Caco-2 (cell line): ENCODE measurements at regions of chr11 and their contacts with region 1.

Region 1: GRCh38 chr11:96342961-96343711 is at the start of gene MAML2:
- DNase-seq: peak; percentile 96 to 97
- H3K4me3 ChIP-seq: peak within 1 kb of the TSS; percentile 66
- H3K4me3 Mint-ChIP-seq: peak within 1 kb of the TSS; percentile 93
- H3K27ac Mint-ChIP-seq: peak within 1 kb of the TSS; percentile 68
- H3K4me1 ChIP-seq: peaks cover 19% of the 10 kb centered on the region
- H3K4me1 Mint-ChIP-seq: peaks cover 24% of the 10 kb centered on the region
- H3K27me3 ChIP-seq: no peaks in the 10 kb centered on the region
- H3K27me3 Mint-ChIP-seq: no peaks in the 10 kb centered on the region
- CTCF ChIP-seq: peak; percentile 99
- total RNA-seq, gene MAML2: 11.5 and 12.2 TPM in 2 replicates

Region 2: GRCh38 chr11:95923728-95924413 is 419.3 kb before region 1 on chr11 and contains the start of gene MTMR2:
- CTCF ChIA-PET with region 1: interaction called, 7 read pairs
- POLR2A ChIA-PET with region 1: no interaction called
- intact Hi-C with region 1: loop called (anchors 2 kb)
- DNase-seq: peak; percentile 88 to 91
- H3K4me3 ChIP-seq: peak within 1 kb of the TSS; percentile 84
- H3K4me3 Mint-ChIP-seq: peak within 1 kb of the TSS; percentile 88
- H3K27ac Mint-ChIP-seq: peak within 1 kb of the TSS; percentile 96
- H3K4me1 ChIP-seq: peaks cover 6% of the 10 kb centered on the region
- H3K4me1 Mint-ChIP-seq: peaks cover 13% of the 10 kb centered on the region
- H3K27me3 ChIP-seq: no peaks in the 10 kb centered on the region
- H3K27me3 Mint-ChIP-seq: no peaks in the 10 kb centered on the region
- CTCF ChIP-seq: peak in 1 of 2 experiments; percentile 14
- total RNA-seq, gene MTMR2: 75.2 and 76.4 TPM in 2 replicates

Region 3: DNA sequence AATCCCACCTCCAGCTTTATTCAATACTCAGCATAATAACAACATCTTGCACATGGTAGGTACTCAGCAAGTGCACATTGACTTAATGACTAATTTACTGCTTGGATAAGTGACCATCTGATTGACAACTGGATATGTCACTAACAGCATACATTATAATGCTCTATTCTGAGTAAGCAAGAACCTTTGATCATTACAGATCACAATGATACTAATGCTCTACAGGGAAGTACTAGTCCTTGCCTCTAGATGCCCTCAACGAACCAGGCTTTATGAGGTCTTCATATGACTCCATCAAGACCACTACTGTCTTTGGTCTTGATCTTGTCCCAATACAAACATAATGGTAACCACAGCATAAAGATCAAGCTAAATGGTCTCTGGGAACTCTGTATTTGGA is 251.7 kb before region 1 on chr11:
- CTCF ChIA-PET with region 1: interaction called, 34 read pairs
- POLR2A ChIA-PET with region 1: no interaction called
- intact Hi-C with region 1: loop called (anchors 1 kb)
- DNase-seq: no peak
- H3K4me3 ChIP-seq: no peak overlapping the region
- H3K4me3 Mint-ChIP-seq: no peak overlapping the region
- H3K27ac Mint-ChIP-seq: peak overlapping the region; percentile 94
- H3K4me1 ChIP-seq: peaks cover 45% of the 10 kb centered on the region
- H3K4me1 Mint-ChIP-seq: peaks cover 59% of the 10 kb centered on the region
- H3K27me3 ChIP-seq: no peaks in the 10 kb centered on the region
- H3K27me3 Mint-ChIP-seq: no peaks in the 10 kb centered on the region
- CTCF ChIP-seq: peak; percentile 12 to 25

Region 4: DNA sequence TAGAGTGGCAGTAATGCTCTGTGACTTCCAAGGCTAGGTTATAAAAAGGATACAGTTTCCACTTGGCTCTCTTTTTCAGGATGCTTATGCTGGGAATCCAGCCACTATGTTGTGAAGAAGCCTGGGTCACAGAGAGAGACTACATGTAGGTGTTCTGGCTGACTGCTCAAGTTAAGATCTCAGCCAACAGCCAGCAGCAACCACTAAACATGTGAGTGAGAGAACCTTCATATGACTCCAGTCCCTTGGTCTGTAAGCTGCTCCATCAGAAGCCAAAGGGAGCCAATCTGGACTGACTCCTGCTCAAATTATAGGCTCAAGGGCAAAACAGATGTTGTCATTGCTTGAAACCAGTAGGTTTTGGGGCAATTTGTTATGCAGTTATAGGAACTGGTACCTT is 162.8 kb before region 1 on chr11:
- CTCF ChIA-PET with region 1: no interaction called
- POLR2A ChIA-PET with region 1: no interaction called
- intact Hi-C with region 1: no loop called
- DNase-seq: no peak
- H3K4me3 ChIP-seq: no peak overlapping the region
- H3K4me3 Mint-ChIP-seq: no peak overlapping the region
- H3K27ac Mint-ChIP-seq: no peak overlapping the region
- H3K4me1 ChIP-seq: no peaks in the 10 kb centered on the region
- H3K4me1 Mint-ChIP-seq: no peaks in the 10 kb centered on the region
- H3K27me3 ChIP-seq: no peaks in the 10 kb centered on the region
- H3K27me3 Mint-ChIP-seq: no peaks in the 10 kb centered on the region
- CTCF ChIP-seq: no peak

Region 5: DNA sequence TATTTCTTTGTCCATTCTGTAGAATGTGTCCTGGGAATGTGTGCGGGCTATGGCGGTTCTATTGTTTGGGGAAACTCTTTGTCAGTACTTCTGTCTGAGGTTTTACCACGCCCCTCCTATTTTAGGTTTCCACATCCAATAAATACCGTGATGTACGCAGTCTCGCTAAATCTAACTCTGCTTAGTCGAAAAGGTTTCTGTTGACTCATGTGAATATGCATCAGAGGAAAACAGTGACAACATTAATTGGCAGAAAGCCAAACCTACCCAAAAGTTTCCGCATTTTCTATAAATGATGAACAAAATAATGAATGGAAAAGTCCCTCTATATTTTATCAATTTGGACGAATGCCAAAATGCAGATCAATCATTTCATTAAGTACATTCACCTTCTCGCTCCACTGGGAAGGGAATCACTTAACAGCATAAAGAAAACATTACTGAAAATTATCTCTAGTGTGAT is 143.5 kb before region 1 on chr11:
- CTCF ChIA-PET with region 1: interaction called, 14 read pairs
- POLR2A ChIA-PET with region 1: no interaction called
- intact Hi-C with region 1: no loop called
- DNase-seq: no peak
- H3K4me3 ChIP-seq: no peak overlapping the region
- H3K4me3 Mint-ChIP-seq: no peak overlapping the region
- H3K27ac Mint-ChIP-seq: peak overlapping the region; percentile 90
- H3K4me1 ChIP-seq: peaks cover 30% of the 10 kb centered on the region
- H3K4me1 Mint-ChIP-seq: peaks cover 31% of the 10 kb centered on the region
- H3K27me3 ChIP-seq: no peaks in the 10 kb centered on the region
- H3K27me3 Mint-ChIP-seq: no peaks in the 10 kb centered on the region
- CTCF ChIP-seq: no peak

Region 6: GRCh38 chr11:96242971-96243647 is 100.0 kb before region 1 on chr11:
- CTCF ChIA-PET with region 1: interaction called, 58 read pairs
- POLR2A ChIA-PET with region 1: interaction called, 12 read pairs
- intact Hi-C with region 1: loop called (anchors 1 kb)
- DNase-seq: peak; percentile 99
- H3K4me3 ChIP-seq: peak overlapping the region; percentile 38
- H3K4me3 Mint-ChIP-seq: peak overlapping the region; percentile 74
- H3K27ac Mint-ChIP-seq: peak overlapping the region; percentile 88
- H3K4me1 ChIP-seq: peaks cover 38% of the 10 kb centered on the region
- H3K4me1 Mint-ChIP-seq: peaks cover 21% of the 10 kb centered on the region
- H3K27me3 ChIP-seq: no peaks in the 10 kb centered on the region
- H3K27me3 Mint-ChIP-seq: no peaks in the 10 kb centered on the region
- CTCF ChIP-seq: no peak

Region 7: GRCh38 chr11:96324960-96325359 is 18.2 kb before region 1 on chr11:
- CTCF ChIA-PET with region 1: interaction called, 9 read pairs
- POLR2A ChIA-PET with region 1: no interaction called
- intact Hi-C with region 1: loop called (anchors 1 kb)
- DNase-seq: peak in 1 of 2 experiments; percentile 52
- H3K4me3 ChIP-seq: no peak overlapping the region
- H3K4me3 Mint-ChIP-seq: peak overlapping the region; percentile 3
- H3K27ac Mint-ChIP-seq: peak overlapping the region; percentile 97
- H3K4me1 ChIP-seq: peaks cover 82% of the 10 kb centered on the region
- H3K4me1 Mint-ChIP-seq: peaks cover 65% of the 10 kb centered on the region
- H3K27me3 ChIP-seq: no peaks in the 10 kb centered on the region
- H3K27me3 Mint-ChIP-seq: no peaks in the 10 kb centered on the region
- CTCF ChIP-seq: no peak

Region 8: DNA sequence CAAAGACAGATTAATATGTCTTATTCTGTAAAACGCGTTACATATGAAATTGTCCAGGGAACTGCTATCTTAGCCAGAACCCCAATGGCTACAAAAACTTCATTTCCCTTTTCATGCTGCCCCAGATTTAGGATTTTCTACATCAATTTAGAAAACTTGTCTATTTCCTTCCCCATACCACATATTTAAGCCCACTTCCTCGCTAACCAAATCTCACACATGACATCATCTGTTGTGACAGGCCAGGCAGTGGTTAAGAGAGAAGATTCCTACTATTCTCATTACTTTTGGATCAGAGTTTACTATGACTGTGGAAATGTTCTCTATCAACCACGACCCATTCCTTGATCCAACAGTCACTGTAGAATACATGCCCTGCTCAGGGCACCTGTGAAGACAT is 30.7 kb after region 1 on chr11:
- CTCF ChIA-PET with region 1: no interaction called
- POLR2A ChIA-PET with region 1: no interaction called
- intact Hi-C with region 1: no loop called
- DNase-seq: no peak
- H3K4me3 ChIP-seq: no peak overlapping the region
- H3K4me3 Mint-ChIP-seq: no peak overlapping the region
- H3K27ac Mint-ChIP-seq: no peak overlapping the region
- H3K4me1 ChIP-seq: no peaks in the 10 kb centered on the region
- H3K4me1 Mint-ChIP-seq: no peaks in the 10 kb centered on the region
- H3K27me3 ChIP-seq: no peaks in the 10 kb centered on the region
- H3K27me3 Mint-ChIP-seq: no peaks in the 10 kb centered on the region
- CTCF ChIP-seq: no peak

Region 9: GRCh38 chr11:96447208-96448110 is 104.3 kb after region 1 on chr11:
- CTCF ChIA-PET with region 1: no interaction called
- POLR2A ChIA-PET with region 1: no interaction called
- intact Hi-C with region 1: no loop called
- DNase-seq: no peak
- H3K4me3 ChIP-seq: no peak overlapping the region
- H3K4me3 Mint-ChIP-seq: no peak overlapping the region
- H3K27ac Mint-ChIP-seq: no peak overlapping the region
- H3K4me1 ChIP-seq: no peaks in the 10 kb centered on the region
- H3K4me1 Mint-ChIP-seq: no peaks in the 10 kb centered on the region
- H3K27me3 ChIP-seq: peaks cover 1% of the 10 kb centered on the region
- H3K27me3 Mint-ChIP-seq: peaks cover 23% of the 10 kb centered on the region
- CTCF ChIP-seq: no peak